MCF 10A (cell line): ENCODE measurements at regions of chr14 and their contacts with region 1.

Region 1: GRCh38 chr14:100031536-100032281 is 33.5 kb upstream of the EVL start:
- DNase-seq: peak; percentile 99
- H3K4me3 Mint-ChIP-seq: peak overlapping the region; percentile 92
- H3K27ac Mint-ChIP-seq: peak overlapping the region; percentile 88
- H3K4me1 Mint-ChIP-seq: peaks cover 59% of the 10 kb centered on the region
- H3K27me3 Mint-ChIP-seq: no peaks in the 10 kb centered on the region
- CTCF ChIP-seq: no peak

Region 2: DNA sequence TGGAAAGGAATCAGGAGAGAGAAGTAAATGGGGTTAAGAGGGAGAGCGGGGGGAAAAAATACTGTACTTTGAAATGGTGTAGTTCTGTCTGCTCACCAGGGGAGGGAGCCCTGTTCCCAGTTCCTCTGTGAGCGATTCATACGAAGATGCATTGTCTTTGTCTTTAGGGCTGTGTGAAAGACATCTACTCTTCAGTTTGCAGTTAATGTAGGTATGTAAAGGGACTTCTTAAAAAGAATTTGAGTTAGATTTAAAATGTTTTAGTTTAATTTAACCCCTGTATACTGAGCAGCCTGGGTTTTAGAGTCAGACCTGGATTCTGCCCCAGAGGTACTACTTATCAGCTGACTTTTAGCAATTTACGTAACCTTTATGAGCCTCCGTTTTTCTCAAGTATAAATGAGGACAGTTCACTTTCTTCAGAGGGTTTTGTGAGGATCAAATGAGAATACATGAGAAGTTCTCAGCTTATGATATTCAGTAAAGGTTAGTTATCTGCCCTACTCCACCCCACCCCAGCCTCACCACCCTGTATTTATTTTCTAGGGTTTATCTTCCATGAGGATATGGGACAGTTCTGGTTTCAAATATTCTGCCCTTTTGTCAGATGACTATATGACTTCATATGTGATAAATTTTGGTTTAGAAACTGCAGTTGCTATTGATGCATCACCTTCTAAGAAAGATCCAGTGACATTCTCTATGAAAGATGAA is 49.0 kb before region 1 on chr14:
- CTCF ChIA-PET with region 1: interaction called, 48 read pairs
- POLR2A ChIA-PET with region 1: interaction called, 40 read pairs
- intact Hi-C with region 1: no loop called
- DNase-seq: peak; percentile 74
- H3K4me3 Mint-ChIP-seq: no peak overlapping the region
- H3K27ac Mint-ChIP-seq: no peak overlapping the region
- H3K4me1 Mint-ChIP-seq: peaks cover 22% of the 10 kb centered on the region
- H3K27me3 Mint-ChIP-seq: no peaks in the 10 kb centered on the region
- CTCF ChIP-seq: peak; percentile 87

Region 3: GRCh38 chr14:100019156-100019744 is 12.5 kb before region 1 on chr14:
- CTCF ChIA-PET with region 1: interaction called, 3 read pairs
- POLR2A ChIA-PET with region 1: interaction called, 26 read pairs
- intact Hi-C with region 1: no loop called
- DNase-seq: no peak
- H3K4me3 Mint-ChIP-seq: no peak overlapping the region
- H3K27ac Mint-ChIP-seq: no peak overlapping the region
- H3K4me1 Mint-ChIP-seq: peaks cover 23% of the 10 kb centered on the region
- H3K27me3 Mint-ChIP-seq: no peaks in the 10 kb centered on the region
- CTCF ChIP-seq: no peak

Region 4: GRCh38 chr14:100056964-100057795 is 25.5 kb after region 1 on chr14:
- CTCF ChIA-PET with region 1: interaction called, 3 read pairs
- POLR2A ChIA-PET with region 1: interaction called, 11 read pairs
- intact Hi-C with region 1: no loop called
- DNase-seq: peak; percentile 33
- H3K4me3 Mint-ChIP-seq: no peak overlapping the region
- H3K27ac Mint-ChIP-seq: peak overlapping the region; percentile 82
- H3K4me1 Mint-ChIP-seq: peaks cover 14% of the 10 kb centered on the region
- H3K27me3 Mint-ChIP-seq: no peaks in the 10 kb centered on the region
- CTCF ChIP-seq: no peak

Region 5: DNA sequence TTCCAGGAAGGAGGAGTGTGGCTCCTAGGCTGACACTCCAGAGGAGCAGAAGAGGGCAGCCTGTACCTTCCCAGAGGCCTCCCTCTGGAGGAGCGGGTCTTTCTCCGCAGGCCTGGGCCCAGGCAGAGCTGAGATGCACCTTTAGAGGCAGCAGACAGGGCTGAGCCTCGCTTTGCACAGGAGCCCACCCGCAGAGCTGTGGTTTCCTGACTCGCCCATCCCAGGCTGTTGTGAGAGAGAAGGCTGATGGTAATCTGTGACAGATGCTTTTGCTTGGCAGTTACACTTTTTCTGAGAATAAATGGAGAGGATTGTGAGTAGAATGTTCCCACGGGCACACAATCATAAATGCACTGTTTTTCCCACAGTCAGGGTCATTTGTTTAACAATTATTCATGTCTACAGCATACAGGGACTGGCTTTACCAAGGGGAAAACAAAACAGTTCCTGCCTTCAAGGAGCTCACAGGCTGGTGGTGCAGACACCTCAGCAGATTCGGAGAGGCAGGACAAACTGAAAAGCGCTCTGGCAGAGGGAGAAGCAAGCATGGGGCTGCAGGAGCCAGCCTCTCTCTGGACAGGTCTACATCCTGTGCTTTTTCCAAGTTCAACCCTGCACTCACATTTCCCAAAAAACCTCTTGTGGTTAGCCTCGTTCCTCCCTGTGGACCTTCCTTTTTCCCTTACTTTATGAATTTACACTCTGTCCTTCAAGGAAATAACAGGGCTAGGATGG is 47.4 kb after region 1 on chr14:
- CTCF ChIA-PET with region 1: no interaction called
- POLR2A ChIA-PET with region 1: interaction called, 5 read pairs
- intact Hi-C with region 1: loop called (anchors 5 kb)
- DNase-seq: peak; percentile 47
- H3K4me3 Mint-ChIP-seq: no peak overlapping the region
- H3K27ac Mint-ChIP-seq: no peak overlapping the region
- H3K4me1 Mint-ChIP-seq: peaks cover 31% of the 10 kb centered on the region
- H3K27me3 Mint-ChIP-seq: no peaks in the 10 kb centered on the region
- CTCF ChIP-seq: no peak

Region 6: GRCh38 chr14:100108042-100108825 is 76.5 kb after region 1 on chr14:
- CTCF ChIA-PET with region 1: interaction called, 12 read pairs
- POLR2A ChIA-PET with region 1: interaction called, 18 read pairs
- intact Hi-C with region 1: loop called (anchors 1 kb)
- DNase-seq: peak; percentile 81
- H3K4me3 Mint-ChIP-seq: peak overlapping the region; percentile 18
- H3K27ac Mint-ChIP-seq: peak overlapping the region; percentile 70
- H3K4me1 Mint-ChIP-seq: peaks cover 41% of the 10 kb centered on the region
- H3K27me3 Mint-ChIP-seq: no peaks in the 10 kb centered on the region
- CTCF ChIP-seq: peak; percentile 89

Region 7: GRCh38 chr14:100239840-100240724 is 208.4 kb after region 1 on chr14:
- CTCF ChIA-PET with region 1: interaction called, 3 read pairs
- POLR2A ChIA-PET with region 1: interaction called, 10 read pairs
- intact Hi-C with region 1: no loop called
- DNase-seq: peak; percentile 82
- H3K4me3 Mint-ChIP-seq: peak overlapping the region; percentile 81
- H3K27ac Mint-ChIP-seq: peak overlapping the region; percentile 87
- H3K4me1 Mint-ChIP-seq: peaks cover 23% of the 10 kb centered on the region
- H3K27me3 Mint-ChIP-seq: no peaks in the 10 kb centered on the region
- CTCF ChIP-seq: peak; percentile 60